Psoas muscle (tissue), 8 donors: ENCODE measurements at regions of chr1 and their contacts with region 1.

Region 1: DNA sequence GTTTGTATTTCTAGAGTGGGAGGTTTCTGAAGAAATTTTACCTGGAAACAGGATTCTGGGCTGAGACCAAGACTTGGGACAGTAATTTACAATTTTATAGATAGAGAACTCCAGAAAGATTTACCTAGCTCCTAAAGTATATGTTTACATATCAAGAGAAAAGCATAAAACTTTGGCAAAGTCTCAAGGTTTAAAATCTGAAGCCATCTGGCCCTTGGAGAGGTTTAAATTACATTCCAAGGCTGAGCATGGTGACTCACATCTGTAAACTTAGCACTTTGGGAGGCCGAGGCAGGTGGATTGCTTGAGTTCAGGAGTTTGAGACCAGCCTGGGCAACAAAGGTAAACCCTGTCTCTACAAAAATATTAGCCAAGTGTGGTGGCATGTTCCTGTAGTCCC is 1351.6 kb upstream of the ADGRL4 start:
- DNase-seq: no peak
- ATAC-seq: no peak
- H3K4me3 ChIP-seq: no peak overlapping the region
- H3K27ac ChIP-seq: no peak overlapping the region
- H3K4me1 ChIP-seq: no peaks in the 10 kb centered on the region
- H3K27me3 ChIP-seq: no peaks in the 10 kb centered on the region
- CTCF ChIP-seq: no peak

Region 2: GRCh38 chr1:80402625-80403024 is 44.5 kb after region 1 on chr1:
- intact Hi-C with region 1: no loop called
- DNase-seq: no peak
- ATAC-seq: no peak
- H3K4me3 ChIP-seq: no peak overlapping the region
- H3K27ac ChIP-seq: no peak overlapping the region
- H3K4me1 ChIP-seq: no peaks in the 10 kb centered on the region
- H3K27me3 ChIP-seq: no peaks in the 10 kb centered on the region
- CTCF ChIP-seq: no peak

Region 3: DNA sequence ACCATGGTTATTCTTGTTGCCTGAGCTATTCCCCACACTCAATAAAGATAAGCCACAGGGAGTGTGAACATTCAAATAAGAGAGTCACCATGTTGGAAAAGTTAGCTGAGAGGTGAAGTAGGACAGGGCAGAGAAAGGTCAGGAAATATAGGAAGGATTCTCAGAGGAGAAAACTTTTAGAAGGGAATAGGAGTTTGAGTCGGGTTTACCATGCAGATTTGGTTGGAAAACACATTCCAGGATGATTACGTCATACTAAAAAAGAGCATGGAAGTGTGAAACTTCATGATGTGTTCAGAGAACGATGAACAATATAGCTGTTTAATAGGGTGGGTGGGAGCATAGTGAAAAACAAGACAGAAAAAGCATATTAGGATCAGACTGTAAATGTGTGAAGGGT is 317.3 kb after region 1 on chr1:
- intact Hi-C with region 1: loop called in 1 of 2 experiments (anchors 10 kb)
- DNase-seq: no peak
- ATAC-seq: no peak
- H3K4me3 ChIP-seq: no peak overlapping the region
- H3K27ac ChIP-seq: no peak overlapping the region
- H3K4me1 ChIP-seq: no peaks in the 10 kb centered on the region
- H3K27me3 ChIP-seq: no peaks in the 10 kb centered on the region
- CTCF ChIP-seq: no peak

Region 4: DNA sequence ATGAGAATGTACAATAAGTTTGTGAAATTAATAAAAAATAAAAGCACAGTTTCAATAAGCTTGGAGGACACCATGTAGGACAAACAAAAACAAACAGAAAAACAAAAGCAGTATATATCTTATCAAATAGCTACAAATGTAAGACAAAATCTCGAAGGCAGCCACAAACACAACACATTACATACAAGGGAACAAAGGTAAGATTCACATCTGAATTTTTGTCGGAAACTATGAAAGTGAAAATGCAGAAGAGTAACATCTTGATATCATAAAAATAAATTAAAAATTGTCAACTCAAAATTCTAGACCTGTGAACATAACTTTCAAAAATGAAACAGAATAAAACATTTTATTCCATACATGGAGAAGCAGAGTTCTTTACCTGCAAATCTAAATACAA is 393.1 kb after region 1 on chr1:
- intact Hi-C with region 1: no loop called
- DNase-seq: no peak
- ATAC-seq: no peak
- H3K4me3 ChIP-seq: no peak overlapping the region
- H3K27ac ChIP-seq: no peak overlapping the region
- H3K4me1 ChIP-seq: no peaks in the 10 kb centered on the region
- H3K27me3 ChIP-seq: no peaks in the 10 kb centered on the region
- CTCF ChIP-seq: no peak